ENCODE measurements at regions of chr2 and their contacts with region 1.

Region 1: DNA sequence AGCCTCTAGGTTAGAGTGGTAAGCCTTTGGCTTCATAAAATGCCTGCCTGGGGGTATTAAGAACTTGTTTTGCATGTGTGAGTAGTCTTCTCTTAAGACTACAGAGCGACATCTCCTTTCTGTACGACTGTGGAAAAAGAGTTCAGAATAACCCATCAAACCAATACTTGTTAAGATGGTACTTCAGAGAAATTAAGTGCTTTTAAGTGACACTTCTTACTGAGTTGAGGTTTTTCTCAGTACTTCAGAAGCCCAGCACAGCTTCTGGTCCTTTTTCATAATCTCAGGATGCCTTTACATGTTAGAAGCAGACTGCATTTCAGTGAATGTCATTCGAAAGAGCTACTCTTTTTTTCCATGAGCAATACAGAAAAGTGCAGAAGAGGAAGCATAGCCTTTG is 10.8 kb downstream of the XRCC5 start:
- DNase-seq: no peak
- H3K4me3 ChIP-seq: no peak overlapping the region
- H3K27ac ChIP-seq: no peak overlapping the region
- H3K4me1 ChIP-seq: peaks cover 5% of the 10 kb centered on the region
- H3K27me3 ChIP-seq: no peaks in the 10 kb centered on the region
- CTCF ChIP-seq: no peak

Region 2: GRCh38 chr2:216130346-216130971 is 10.5 kb after region 1 on chr2:
- CTCF ChIA-PET with region 1: no interaction called
- dilution Hi-C with region 1: no loop called
- in situ Hi-C with region 1: no loop called
- intact Hi-C with region 1: loop called (anchors 1 kb)
- DNase-seq: no peak
- H3K4me3 ChIP-seq: no peak overlapping the region
- H3K27ac ChIP-seq: no peak overlapping the region
- H3K4me1 ChIP-seq: no peaks in the 10 kb centered on the region
- H3K27me3 ChIP-seq: no peaks in the 10 kb centered on the region
- CTCF ChIP-seq: no peak